Activated T-helper 1 cell treated with anti-CD3 and anti-CD28 coated beads, Interleukin-12 subunit alpha, Interleukin-12 subunit beta, Interleukin-2, Interleukin-4 antibody, amounts not matched to agents 30 ng/mL and 10 ng/mL and 1 ng/mL, durations not matched to agents 14 hours and 24 hours and 36 hours (primary cell): ENCODE measurements at regions of chr16 and their contacts with region 1.

Region 1: GRCh38 chr16:80526425-80527061 is 14.2 kb upstream of the DYNLRB2 start:
- DNase-seq: peak; percentile 35
- H3K4me3 Mint-ChIP-seq: no peak overlapping the region
- H3K27ac Mint-ChIP-seq: no peak overlapping the region
- H3K4me1 Mint-ChIP-seq: peaks cover 20% of the 10 kb centered on the region
- H3K27me3 Mint-ChIP-seq: no peaks in the 10 kb centered on the region

Region 2: DNA sequence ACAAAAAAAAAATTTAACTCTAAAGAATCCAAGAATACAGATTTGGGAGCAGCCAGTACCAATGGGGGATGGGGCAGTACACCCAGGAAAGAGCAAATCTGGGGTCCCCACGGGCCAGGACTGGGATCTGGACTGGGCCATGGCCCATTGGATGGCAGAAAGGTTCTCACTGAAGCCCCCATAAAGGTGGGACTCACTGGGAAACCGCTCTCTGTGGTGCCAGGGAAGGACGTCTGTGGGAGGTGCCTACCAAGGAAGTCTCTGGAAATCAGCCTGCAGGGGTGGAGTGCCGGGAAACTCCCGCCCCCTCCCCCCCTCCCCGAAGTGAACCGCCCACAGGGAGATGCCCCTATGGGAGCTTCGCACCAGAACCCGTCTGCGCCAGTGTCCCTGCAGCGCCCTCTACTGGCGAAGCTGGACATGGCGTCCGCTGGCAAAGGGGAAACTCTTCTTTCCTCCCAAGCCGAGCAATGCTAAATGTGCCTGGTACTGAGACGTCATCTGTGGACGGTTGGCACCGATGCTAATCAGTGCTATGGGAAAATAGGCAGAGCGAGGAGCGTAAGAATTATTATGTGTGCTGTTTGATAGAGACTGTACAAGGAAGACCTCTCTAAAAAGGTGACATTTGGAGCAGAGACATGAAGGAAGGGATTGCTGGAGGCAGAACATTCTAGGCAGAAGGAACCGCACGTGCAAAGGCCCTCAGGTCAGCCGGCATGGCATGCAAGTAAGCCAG is 1756.0 kb before region 1 on chr16:
- intact Hi-C with region 1: loop called (anchors 10 kb)
- DNase-seq: peak; percentile 65
- H3K4me3 Mint-ChIP-seq: peak overlapping the region; percentile 16
- H3K27ac Mint-ChIP-seq: peak overlapping the region; percentile 65
- H3K4me1 Mint-ChIP-seq: peaks cover 54% of the 10 kb centered on the region
- H3K27me3 Mint-ChIP-seq: no peaks in the 10 kb centered on the region

Region 3: GRCh38 chr16:80466024-80466987 is 60.2 kb before region 1 on chr16:
- intact Hi-C with region 1: loop called (anchors 2 kb)
- DNase-seq: peak; percentile 40
- H3K4me3 Mint-ChIP-seq: no peak overlapping the region
- H3K27ac Mint-ChIP-seq: no peak overlapping the region
- H3K4me1 Mint-ChIP-seq: no peaks in the 10 kb centered on the region
- H3K27me3 Mint-ChIP-seq: peaks cover 10% of the 10 kb centered on the region

Region 4: GRCh38 chr16:80656711-80657150 is 130.2 kb after region 1 on chr16:
- intact Hi-C with region 1: loop called (anchors 2 kb)
- DNase-seq: peak; percentile 42
- H3K4me3 Mint-ChIP-seq: peak overlapping the region; percentile 85
- H3K27ac Mint-ChIP-seq: peak overlapping the region; percentile 91
- H3K4me1 Mint-ChIP-seq: peaks cover 43% of the 10 kb centered on the region
- H3K27me3 Mint-ChIP-seq: no peaks in the 10 kb centered on the region

Region 5: DNA sequence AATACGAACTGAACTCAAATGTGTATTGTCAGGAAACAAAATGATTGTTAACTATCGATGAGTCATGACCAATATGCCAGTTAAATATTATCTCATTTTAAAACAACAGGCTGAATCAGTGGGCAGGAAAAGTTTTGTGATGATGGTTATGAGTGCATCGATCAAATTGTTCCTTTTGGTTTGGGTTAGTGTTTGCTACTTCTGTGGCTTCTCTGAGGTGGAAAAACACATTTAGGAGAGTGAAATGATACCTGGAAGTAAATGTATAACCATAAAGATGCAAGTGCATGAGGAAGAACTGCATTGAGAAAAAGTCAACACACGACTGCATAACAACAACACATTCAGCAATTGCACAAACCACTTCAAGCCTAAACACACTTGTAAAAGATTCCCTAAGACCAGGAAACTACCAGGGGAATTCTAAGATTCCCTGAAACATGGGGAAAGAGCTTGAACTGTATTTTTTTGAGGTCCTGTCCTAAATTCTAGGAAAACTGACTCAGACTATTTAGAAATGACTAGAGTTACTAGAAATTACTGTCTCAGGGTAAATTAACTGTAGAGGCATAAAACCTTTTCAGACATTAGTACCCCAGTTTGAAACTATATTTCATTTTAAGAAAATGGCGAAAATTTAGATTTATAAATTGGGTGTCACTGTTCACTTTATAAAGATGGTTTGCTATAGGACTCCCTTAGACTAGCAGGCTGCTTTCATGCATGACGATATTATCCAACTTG is 233.0 kb after region 1 on chr16:
- intact Hi-C with region 1: loop called (anchors 1 kb)
- DNase-seq: no peak
- H3K4me3 Mint-ChIP-seq: peak overlapping the region; percentile 23
- H3K27ac Mint-ChIP-seq: peak overlapping the region; percentile 67
- H3K4me1 Mint-ChIP-seq: peaks cover 44% of the 10 kb centered on the region
- H3K27me3 Mint-ChIP-seq: no peaks in the 10 kb centered on the region

Region 6: GRCh38 chr16:80824718-80825364 is 298.3 kb after region 1 on chr16:
- intact Hi-C with region 1: loop called (anchors 1 kb)
- DNase-seq: no peak
- H3K4me3 Mint-ChIP-seq: no peak overlapping the region
- H3K27ac Mint-ChIP-seq: no peak overlapping the region
- H3K4me1 Mint-ChIP-seq: peaks cover 7% of the 10 kb centered on the region
- H3K27me3 Mint-ChIP-seq: peaks cover 15% of the 10 kb centered on the region

Region 7: DNA sequence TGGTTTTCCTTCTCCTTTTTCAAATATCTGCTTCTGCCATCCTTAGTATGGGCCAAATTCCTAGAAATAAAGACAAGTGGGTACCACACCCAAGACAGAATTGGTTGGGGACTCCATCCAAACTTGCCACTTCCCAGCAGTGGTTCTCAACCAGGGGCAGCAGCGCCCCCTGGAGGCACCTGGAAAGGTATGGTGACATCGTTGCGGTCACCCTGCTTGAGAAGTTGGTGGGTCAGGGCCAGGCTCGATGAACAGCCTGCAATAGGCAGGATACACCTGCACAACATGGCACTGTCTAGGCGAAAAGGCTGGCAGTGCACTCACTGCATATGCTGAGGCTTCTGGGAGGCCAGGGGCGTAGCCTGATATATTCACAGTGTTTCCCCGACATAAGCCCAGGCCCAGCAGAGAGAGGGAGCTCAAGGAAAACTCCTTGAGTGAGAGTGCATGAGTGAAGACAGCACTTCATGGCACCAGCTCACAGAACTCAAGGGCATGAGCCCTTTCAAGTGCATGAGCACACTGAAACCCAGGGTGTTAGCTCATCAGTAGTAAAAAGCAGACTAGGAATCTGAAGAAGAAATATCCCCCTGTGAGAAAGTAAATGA is 422.4 kb after region 1 on chr16:
- intact Hi-C with region 1: loop called (anchors 5 kb)
- DNase-seq: peak; percentile 17
- H3K4me3 Mint-ChIP-seq: no peak overlapping the region
- H3K27ac Mint-ChIP-seq: no peak overlapping the region
- H3K4me1 Mint-ChIP-seq: peaks cover 18% of the 10 kb centered on the region
- H3K27me3 Mint-ChIP-seq: peaks cover 6% of the 10 kb centered on the region